CD14-positive monocyte (primary cell): ENCODE measurements at regions of chr9 and their contacts with region 1.

Region 1: DNA sequence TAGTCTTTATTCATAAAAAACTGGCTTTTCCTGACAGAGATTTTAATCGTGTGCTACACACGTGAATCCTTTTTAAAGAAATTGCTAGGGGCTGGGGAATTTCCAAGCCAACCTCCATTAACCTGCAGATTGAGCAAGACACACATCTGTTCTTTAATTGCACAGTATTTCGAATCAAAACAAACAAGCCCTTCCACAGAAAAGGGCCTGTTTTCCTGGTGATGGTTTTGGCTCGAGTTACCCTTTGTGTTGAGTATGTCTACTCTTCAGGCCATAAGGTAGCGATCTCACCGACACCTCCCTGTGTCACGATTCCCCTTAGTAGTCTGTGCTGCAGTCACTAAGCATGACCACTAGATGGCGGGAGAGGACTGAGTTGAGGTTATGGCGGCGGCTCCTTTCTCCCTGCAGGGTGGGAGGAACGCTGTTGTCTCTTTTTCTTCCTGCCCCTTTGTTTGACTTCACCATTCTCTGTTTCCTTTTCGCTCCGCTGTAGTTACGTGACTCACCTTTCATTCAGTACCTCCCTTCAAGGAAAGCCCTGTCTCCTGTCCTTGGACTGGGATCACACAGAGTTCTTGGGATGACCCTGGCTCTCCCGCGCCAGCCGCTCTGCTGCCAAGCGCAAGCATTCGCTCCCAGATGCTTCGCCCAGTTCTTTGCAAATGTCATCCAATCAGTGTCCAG is 137.1 kb upstream of the SLC24A2 start:
- DNase-seq: peak; percentile 55 to 70 (median 68)
- H3K4me3 ChIP-seq: peak overlapping the region in 1 of 3 experiments; percentile 56
- H3K4me3 Mint-ChIP-seq: peak overlapping the region; percentile 73 to 89
- H3K27ac ChIP-seq: no peak overlapping the region
- H3K27ac Mint-ChIP-seq: no peak overlapping the region
- H3K4me1 ChIP-seq: peaks cover 14 to 16% of the 10 kb centered on the region in 2 donors
- H3K4me1 Mint-ChIP-seq: peaks cover 27% of the 10 kb centered on the region
- H3K27me3 ChIP-seq: peaks cover 0 to 2% of the 10 kb centered on the region in 2 donors
- H3K27me3 Mint-ChIP-seq: peaks cover 4 to 9% (median 5%) of the 10 kb centered on the region in 3 donors
- CTCF ChIP-seq: peak; percentile 99

Region 2: GRCh38 chr9:19757745-19758144 is 168.2 kb before region 1 on chr9:
- intact Hi-C with region 1: no loop called
- DNase-seq: no peak
- H3K4me3 ChIP-seq: no peak overlapping the region
- H3K4me3 Mint-ChIP-seq: no peak overlapping the region
- H3K27ac ChIP-seq: no peak overlapping the region
- H3K27ac Mint-ChIP-seq: no peak overlapping the region
- H3K4me1 ChIP-seq: no peaks in the 10 kb centered on the region
- H3K4me1 Mint-ChIP-seq: no peaks in the 10 kb centered on the region
- H3K27me3 ChIP-seq: no peaks in the 10 kb centered on the region
- H3K27me3 Mint-ChIP-seq: peaks cover 0 to 2% (median 2%) of the 10 kb centered on the region in 3 donors
- CTCF ChIP-seq: no peak

Region 3: GRCh38 chr9:20941174-20941690 is 1015.3 kb after region 1 on chr9:
- intact Hi-C with region 1: loop called (anchors 2 to 5 kb)
- DNase-seq: peak; percentile 36 to 75 (median 61)
- H3K4me3 ChIP-seq: no peak overlapping the region
- H3K4me3 Mint-ChIP-seq: no peak overlapping the region
- H3K27ac ChIP-seq: no peak overlapping the region
- H3K27ac Mint-ChIP-seq: peak overlapping the region in 1 of 7 donors; percentile 62
- H3K4me1 ChIP-seq: no peaks in the 10 kb centered on the region
- H3K4me1 Mint-ChIP-seq: peaks cover 3% of the 10 kb centered on the region
- H3K27me3 ChIP-seq: no peaks in the 10 kb centered on the region
- H3K27me3 Mint-ChIP-seq: peaks cover 0 to 3% (median 0%) of the 10 kb centered on the region in 3 donors
- CTCF ChIP-seq: peak; percentile 89

Region 4: GRCh38 chr9:21119093-21119770 is 1193.3 kb after region 1 on chr9:
- intact Hi-C with region 1: loop called in 1 of 2 experiments (anchors 5 kb)
- DNase-seq: peak; percentile 81 to 94 (median 89)
- H3K4me3 ChIP-seq: peak overlapping the region in 1 of 3 experiments; percentile 45
- H3K4me3 Mint-ChIP-seq: peak overlapping the region; percentile 28 to 46
- H3K27ac ChIP-seq: peak overlapping the region; percentile 51 to 83
- H3K27ac Mint-ChIP-seq: peak overlapping the region; percentile 83 to 98 (median 91)
- H3K4me1 ChIP-seq: peaks cover 18 to 21% of the 10 kb centered on the region in 2 donors
- H3K4me1 Mint-ChIP-seq: peaks cover 24% of the 10 kb centered on the region
- H3K27me3 ChIP-seq: no peaks in the 10 kb centered on the region
- H3K27me3 Mint-ChIP-seq: peaks cover 0 to 1% (median 0%) of the 10 kb centered on the region in 3 donors
- CTCF ChIP-seq: no peak